ENCODE measurements at regions of chr2 and their contacts with region 1.

Region 1: GRCh38 chr2:207248702-207249377 is 83.1 kb upstream of the KLF7 start:
- DNase-seq: no peak
- CTCF ChIP-seq: no peak

Region 2: GRCh38 chr2:207188626-207189419 is 60.0 kb before region 1 on chr2:
- CTCF ChIA-PET with region 1: no interaction called
- POLR2A ChIA-PET with region 1: no interaction called
- DNase-seq: no peak
- CTCF ChIP-seq: no peak

Region 3: GRCh38 chr2:207223051-207223450 is 25.8 kb before region 1 on chr2:
- CTCF ChIA-PET with region 1: interaction called, 10 read pairs
- POLR2A ChIA-PET with region 1: interaction called, 3 read pairs
- DNase-seq: peak; percentile 40
- CTCF ChIP-seq: no peak